Naive thymus-derived CD4-positive, alpha-beta T cell (primary cell): ENCODE measurements at regions of chr2 and their contacts with region 1.

Region 1: DNA sequence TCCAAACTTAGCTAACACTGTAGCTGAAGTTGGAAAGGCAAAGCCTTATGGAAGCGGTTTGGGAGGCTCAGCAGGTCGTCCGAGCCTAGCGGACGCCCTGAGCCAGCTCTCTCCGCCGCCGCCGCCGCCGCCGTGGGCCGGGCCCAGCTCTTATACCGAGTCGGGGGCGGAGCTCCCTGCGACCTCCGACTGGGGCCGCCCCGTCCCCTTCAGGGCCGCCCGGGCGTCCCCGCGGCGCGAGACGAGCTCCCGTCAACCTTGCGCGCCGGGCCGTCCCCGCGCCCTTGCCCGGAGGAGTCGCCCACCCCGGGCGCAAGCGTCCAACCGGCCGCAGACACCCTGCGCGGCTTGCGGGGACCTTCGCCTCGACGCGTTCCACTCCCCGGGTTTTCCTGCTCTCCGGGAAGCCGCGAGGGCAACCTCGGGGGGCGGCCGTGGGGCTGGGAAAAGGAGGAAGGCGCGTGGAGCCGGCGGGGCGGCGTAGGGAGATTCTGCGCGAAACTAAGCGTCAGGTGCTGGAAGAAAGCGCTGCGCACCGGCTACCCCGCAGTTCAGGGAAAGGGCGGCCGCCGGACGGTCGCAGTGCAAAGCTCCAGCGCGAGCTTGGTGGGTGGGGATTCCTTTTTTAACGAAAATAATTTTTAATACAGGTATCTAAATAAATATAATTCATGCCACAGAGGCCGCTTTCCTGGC is at the start of gene SLC40A1:
- DNase-seq: peak; percentile 54 to 75 (median 66)
- ATAC-seq: peak; percentile 96
- H3K4me3 ChIP-seq: peak within 1 kb of the TSS; percentile 79
- H3K4me3 Mint-ChIP-seq: peak within 1 kb of the TSS; percentile 83 to 100 (median 93)
- H3K27ac ChIP-seq: peak within 1 kb of the TSS; percentile 80
- H3K27ac Mint-ChIP-seq: peak within 1 kb of the TSS; percentile 30 to 98 (median 87)
- H3K4me1 ChIP-seq: peaks cover 0 to 12% of the 10 kb centered on the region in 2 donors
- H3K4me1 Mint-ChIP-seq: peaks cover 24 to 63% (median 56%) of the 10 kb centered on the region in 7 donors
- H3K27me3 ChIP-seq: peaks cover 0 to 5% of the 10 kb centered on the region in 2 donors
- H3K27me3 Mint-ChIP-seq: peaks cover 0 to 47% (median 0%) of the 10 kb centered on the region in 5 donors
- total RNA-seq, gene SLC40A1: 4.2 to 38.0 (median 24.4) TPM

Region 2: GRCh38 chr2:189302274-189302948 is 278.4 kb before region 1 on chr2:
- CTCF ChIA-PET with region 1: no interaction called
- POLR2A ChIA-PET with region 1: no interaction called
- intact Hi-C with region 1: loop called in 1 of 2 experiments (anchors 5 kb)
- DNase-seq: no peak
- ATAC-seq: no peak
- H3K4me3 ChIP-seq: no peak overlapping the region
- H3K4me3 Mint-ChIP-seq: peak overlapping the region in 8 of 10 donors; percentile 4 to 74 (median 60)
- H3K27ac ChIP-seq: no peak overlapping the region
- H3K27ac Mint-ChIP-seq: peak overlapping the region in 8 of 9 donors; percentile 25 to 95 (median 70)
- H3K4me1 ChIP-seq: peaks cover 56 to 88% of the 10 kb centered on the region in 2 donors
- H3K4me1 Mint-ChIP-seq: peaks cover 57 to 96% (median 91%) of the 10 kb centered on the region in 7 donors
- H3K27me3 ChIP-seq: no peaks in the 10 kb centered on the region
- H3K27me3 Mint-ChIP-seq: no peaks in the 10 kb centered on the region

Region 3: DNA sequence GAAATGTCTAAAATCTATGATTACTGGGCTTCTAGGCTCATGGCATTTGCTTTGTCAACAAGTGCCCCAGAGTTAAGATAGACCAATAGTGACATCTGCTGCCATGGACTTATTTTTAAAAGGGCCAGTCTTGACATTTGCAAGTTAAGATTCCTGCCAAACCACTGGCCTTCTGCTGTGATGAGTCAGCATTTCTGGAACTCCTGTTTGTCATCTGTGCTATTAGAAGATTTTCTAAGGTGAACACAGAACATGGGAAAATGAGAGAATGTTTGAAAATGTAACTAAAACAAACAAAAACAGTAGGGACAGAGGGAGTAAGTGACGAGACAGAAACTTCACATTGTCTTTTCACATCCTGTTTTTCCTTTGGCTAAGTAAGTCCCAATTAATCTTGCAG is 233.3 kb before region 1 on chr2:
- CTCF ChIA-PET with region 1: no interaction called
- POLR2A ChIA-PET with region 1: no interaction called
- intact Hi-C with region 1: no loop called
- DNase-seq: peak in 7 of 9 donors; percentile 14 to 58 (median 47)
- ATAC-seq: peak; percentile 52
- H3K4me3 ChIP-seq: no peak overlapping the region
- H3K4me3 Mint-ChIP-seq: no peak overlapping the region
- H3K27ac ChIP-seq: no peak overlapping the region
- H3K27ac Mint-ChIP-seq: peak overlapping the region in 1 of 9 donors; percentile 62
- H3K4me1 ChIP-seq: peaks cover 0 to 7% of the 10 kb centered on the region in 2 donors
- H3K4me1 Mint-ChIP-seq: peaks cover 7 to 22% (median 18%) of the 10 kb centered on the region in 7 donors
- H3K27me3 ChIP-seq: no peaks in the 10 kb centered on the region
- H3K27me3 Mint-ChIP-seq: no peaks in the 10 kb centered on the region

Region 4: GRCh38 chr2:189569295-189569910 is 11.4 kb before region 1 on chr2:
- CTCF ChIA-PET with region 1: no interaction called
- POLR2A ChIA-PET with region 1: interaction called, 40 read pairs
- intact Hi-C with region 1: loop called in 1 of 2 experiments (anchors 1 kb)
- DNase-seq: no peak
- ATAC-seq: no peak
- H3K4me3 ChIP-seq: no peak overlapping the region
- H3K4me3 Mint-ChIP-seq: peak overlapping the region in 9 of 10 donors; percentile 1 to 68 (median 26)
- H3K27ac ChIP-seq: peak overlapping the region; percentile 46
- H3K27ac Mint-ChIP-seq: peak overlapping the region; percentile 11 to 99 (median 90)
- H3K4me1 ChIP-seq: peaks cover 0 to 13% of the 10 kb centered on the region in 2 donors
- H3K4me1 Mint-ChIP-seq: peaks cover 14 to 69% (median 52%) of the 10 kb centered on the region in 7 donors
- H3K27me3 ChIP-seq: no peaks in the 10 kb centered on the region
- H3K27me3 Mint-ChIP-seq: no peaks in the 10 kb centered on the region

Region 5: GRCh38 chr2:189633392-189633811 is 52.6 kb after region 1 on chr2:
- CTCF ChIA-PET with region 1: no interaction called
- POLR2A ChIA-PET with region 1: interaction called, 7 read pairs
- intact Hi-C with region 1: loop called in 1 of 2 experiments (anchors 2 kb)
- DNase-seq: peak in 5 of 9 donors; percentile 23 to 39 (median 31)
- ATAC-seq: peak; percentile 52
- H3K4me3 ChIP-seq: no peak overlapping the region
- H3K4me3 Mint-ChIP-seq: no peak overlapping the region
- H3K27ac ChIP-seq: no peak overlapping the region
- H3K27ac Mint-ChIP-seq: no peak overlapping the region
- H3K4me1 ChIP-seq: no peaks in the 10 kb centered on the region
- H3K4me1 Mint-ChIP-seq: peaks cover 0 to 12% (median 3%) of the 10 kb centered on the region in 7 donors
- H3K27me3 ChIP-seq: no peaks in the 10 kb centered on the region
- H3K27me3 Mint-ChIP-seq: peaks cover 0 to 3% (median 0%) of the 10 kb centered on the region in 5 donors

Region 6: DNA sequence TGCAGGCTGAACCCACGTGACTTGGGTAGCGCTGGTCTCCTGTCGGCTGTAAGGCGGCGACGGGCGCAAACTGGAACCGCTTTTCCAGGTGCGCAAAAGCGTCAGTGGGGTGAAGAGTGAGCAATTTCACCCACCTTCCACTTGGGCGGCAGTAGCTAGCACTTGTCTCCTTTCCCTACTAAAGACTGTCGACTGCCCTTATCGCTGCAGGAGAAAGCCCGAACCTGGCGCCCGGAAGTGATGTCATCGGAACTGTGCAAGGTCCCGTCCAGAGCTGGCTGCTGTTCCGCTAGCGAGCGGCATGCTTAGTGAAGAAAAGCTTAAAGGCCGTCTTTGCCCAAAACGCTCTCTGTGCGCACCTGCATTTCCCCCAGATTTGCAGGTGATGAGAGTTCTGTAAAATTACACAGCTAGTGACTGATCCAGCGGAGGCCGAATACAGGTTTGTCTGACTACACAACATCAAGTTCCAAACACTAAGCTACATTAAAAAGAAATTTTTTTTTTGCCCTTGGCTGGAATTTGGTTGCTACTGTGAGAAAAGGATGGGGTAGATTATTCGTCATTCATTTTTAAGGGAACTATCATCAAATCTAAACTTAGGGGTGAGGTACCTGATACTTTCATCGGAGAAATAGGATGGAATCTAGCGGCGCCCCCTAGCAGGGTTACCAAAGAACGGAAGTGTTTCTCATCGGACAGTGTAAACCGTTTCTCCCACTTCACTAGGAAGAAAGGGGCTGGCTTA is 181.9 kb after region 1 on chr2 and contains the start of gene OSGEPL1:
- CTCF ChIA-PET with region 1: no interaction called
- POLR2A ChIA-PET with region 1: interaction called, 8 read pairs
- intact Hi-C with region 1: loop called (anchors 1 to 2 kb)
- DNase-seq: peak; percentile 72 to 95 (median 88)
- ATAC-seq: peak; percentile 95
- H3K4me3 ChIP-seq: peak within 1 kb of the TSS; percentile 88
- H3K4me3 Mint-ChIP-seq: peak within 1 kb of the TSS; percentile 88 to 98 (median 94)
- H3K27ac ChIP-seq: peak within 1 kb of the TSS; percentile 89
- H3K27ac Mint-ChIP-seq: peak within 1 kb of the TSS; percentile 94 to 98 (median 96)
- H3K4me1 ChIP-seq: peaks cover 6 to 10% of the 10 kb centered on the region in 2 donors
- H3K4me1 Mint-ChIP-seq: peaks cover 4 to 18% (median 9%) of the 10 kb centered on the region in 7 donors
- H3K27me3 ChIP-seq: no peaks in the 10 kb centered on the region
- H3K27me3 Mint-ChIP-seq: no peaks in the 10 kb centered on the region
- total RNA-seq, gene OSGEPL1: 6.8 to 24.2 (median 7.2) TPM

Region 7: GRCh38 chr2:189836657-189837056 is 255.9 kb after region 1 on chr2:
- CTCF ChIA-PET with region 1: no interaction called
- POLR2A ChIA-PET with region 1: no interaction called
- intact Hi-C with region 1: no loop called
- DNase-seq: no peak
- ATAC-seq: no peak
- H3K4me3 ChIP-seq: no peak overlapping the region
- H3K4me3 Mint-ChIP-seq: no peak overlapping the region
- H3K27ac ChIP-seq: no peak overlapping the region
- H3K27ac Mint-ChIP-seq: no peak overlapping the region
- H3K4me1 ChIP-seq: no peaks in the 10 kb centered on the region
- H3K4me1 Mint-ChIP-seq: peaks cover 0 to 8% (median 0%) of the 10 kb centered on the region in 7 donors
- H3K27me3 ChIP-seq: no peaks in the 10 kb centered on the region
- H3K27me3 Mint-ChIP-seq: no peaks in the 10 kb centered on the region